ENCODE measurements at regions of chr11 and their contacts with region 1.

Region 1: DNA sequence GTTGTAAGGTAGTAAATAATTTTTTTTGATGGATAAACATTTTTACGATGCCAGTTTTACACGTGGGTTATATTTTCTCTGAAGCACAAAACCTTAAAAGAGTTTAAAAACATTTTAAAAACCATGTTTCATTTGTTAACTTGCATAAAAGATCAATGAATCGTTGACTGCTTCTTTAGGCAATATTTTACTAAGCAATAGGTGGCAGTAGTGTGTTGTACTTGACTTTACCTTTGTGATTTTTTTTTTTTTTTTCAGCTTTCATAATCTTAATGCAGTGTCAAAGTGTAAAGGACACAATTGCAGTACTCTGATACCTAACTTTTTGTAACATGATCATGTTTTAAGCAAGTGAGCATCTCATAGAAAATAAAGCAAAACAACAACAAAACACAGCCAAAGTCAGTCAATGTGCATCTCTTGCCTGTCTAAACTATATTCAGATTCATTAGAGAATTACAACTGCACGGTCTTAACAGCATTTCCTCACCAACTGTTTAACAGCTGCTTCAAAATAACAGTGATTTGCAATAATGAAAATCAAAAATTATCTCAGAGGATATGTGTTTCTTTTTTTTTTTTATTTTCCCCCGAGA is 27.7 kb downstream of the DNAJC24 start:
- DNase-seq: no peak

Region 2: GRCh38 chr11:31958076-31958735 is 560.9 kb after region 1 on chr11:
- intact Hi-C with region 1: loop called (anchors 5 kb)
- DNase-seq: peak in 8 of 10 donors; percentile 39 to 93 (median 66)

Region 3: DNA sequence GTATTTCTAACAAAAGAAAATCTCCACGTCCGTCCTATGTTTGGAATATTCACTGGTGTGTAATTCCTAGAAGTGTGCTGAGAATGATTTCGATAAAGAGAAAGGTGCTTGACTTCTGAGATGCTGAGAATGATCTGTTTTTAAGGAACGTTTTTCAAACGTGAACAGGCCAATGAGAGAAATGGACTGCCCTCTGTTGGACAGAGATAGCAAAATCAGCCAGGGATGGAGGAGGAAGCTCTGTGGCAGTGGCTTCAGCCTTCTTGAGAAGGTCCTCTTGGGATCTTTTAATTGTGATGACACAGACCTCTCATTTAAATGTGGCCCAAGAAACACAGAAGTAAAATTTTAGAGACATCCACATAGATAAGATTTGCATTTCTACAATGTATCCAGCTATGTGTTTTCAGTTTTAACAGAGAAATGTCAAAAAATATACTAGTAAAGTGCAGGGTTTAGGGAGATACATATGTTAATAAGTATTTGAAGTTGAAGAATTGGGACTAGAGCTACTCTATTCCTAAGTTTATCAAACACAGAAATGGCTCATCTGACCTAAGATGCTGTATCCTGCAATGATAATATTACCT is 609.6 kb after region 1 on chr11:
- intact Hi-C with region 1: loop called (anchors 5 kb)
- DNase-seq: peak in 1 of 10 donors; percentile 27